ENCODE measurements at regions of chr12 and their contacts with region 1.

Region 1: DNA sequence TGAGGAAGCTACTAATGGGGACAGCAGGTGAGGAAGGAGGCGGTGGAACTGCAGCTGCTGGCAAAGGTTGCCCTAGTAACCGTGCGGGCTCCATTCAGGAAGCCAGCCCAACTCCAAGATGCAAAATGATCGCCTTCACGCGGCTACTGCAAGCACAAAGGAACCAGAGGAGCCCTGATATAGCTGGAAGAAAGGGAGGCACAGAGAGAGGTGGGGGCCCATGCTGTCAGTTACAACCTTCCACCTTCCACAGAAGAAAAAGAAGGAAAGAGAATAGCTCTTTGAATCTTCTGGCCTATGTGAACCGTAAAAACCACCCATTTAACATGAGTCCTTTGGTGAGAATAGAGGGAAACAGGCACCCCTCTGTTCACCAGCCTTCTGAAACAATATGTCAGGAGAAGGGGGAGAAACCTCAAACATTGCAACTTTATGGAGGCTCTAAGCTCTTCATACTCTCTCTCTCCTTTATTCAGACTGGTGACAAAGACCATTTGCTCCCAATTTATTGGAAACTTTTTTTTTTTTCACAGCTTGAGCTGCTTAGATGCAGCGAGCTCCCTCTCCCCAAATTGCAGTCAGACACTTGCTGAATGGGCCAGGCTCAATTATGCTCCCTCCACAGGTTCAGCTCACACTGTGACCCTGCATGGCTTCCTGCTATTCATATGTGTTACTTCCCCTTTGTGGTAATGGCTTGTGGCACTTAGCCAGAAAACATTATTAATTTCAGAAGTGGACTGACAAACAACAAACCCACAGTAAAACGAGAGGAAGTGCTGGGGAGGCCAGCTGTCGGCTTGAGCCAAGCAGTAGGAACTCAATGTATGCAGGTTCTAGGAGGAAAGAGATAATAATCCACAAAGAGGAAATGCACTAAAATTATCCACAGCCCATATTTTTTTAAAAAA is 6.2 kb downstream of the DUSP6 start:
- DNase-seq: peak; percentile 40 to 73 (median 68)
- ATAC-seq: peak; percentile 59 to 66
- H3K4me3 ChIP-seq: no peak overlapping the region
- H3K27ac ChIP-seq: peak overlapping the region; percentile 56
- H3K4me1 ChIP-seq: peaks cover 3% of the 10 kb centered on the region
- H3K27me3 ChIP-seq: no peaks in the 10 kb centered on the region

Region 2: DNA sequence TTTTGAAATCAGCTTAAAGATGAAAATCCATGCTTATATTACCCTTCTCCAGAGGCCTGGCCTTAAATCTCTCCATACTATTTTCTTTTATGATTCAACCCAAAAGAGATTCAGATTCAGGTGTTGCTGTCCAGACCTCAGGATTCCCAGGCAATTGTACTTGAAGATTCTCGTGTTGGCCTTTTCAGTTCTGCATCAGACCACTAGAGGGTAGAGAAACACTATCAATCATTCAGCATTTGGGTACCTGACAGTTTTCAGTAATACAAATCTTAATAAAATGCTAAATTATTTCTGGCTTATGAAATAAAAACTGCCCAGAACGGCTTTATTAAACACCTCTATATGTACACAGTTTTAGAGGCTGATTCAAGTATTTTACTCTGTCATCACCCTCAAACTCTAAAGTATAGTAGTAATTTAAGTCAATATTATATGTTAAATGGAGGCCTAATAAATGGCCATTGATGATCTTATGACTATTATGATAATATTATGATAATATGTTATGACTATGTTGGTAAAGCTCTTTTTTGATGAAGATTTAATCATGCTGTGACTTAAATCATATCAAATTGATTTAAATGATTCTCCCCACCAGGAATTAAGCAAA is 294.9 kb before region 1 on chr12:
- intact Hi-C with region 1: loop called (anchors 5 to 10 kb)
- DNase-seq: no peak
- ATAC-seq: peak; percentile 64 to 81
- H3K4me3 ChIP-seq: no peak overlapping the region
- H3K27ac ChIP-seq: no peak overlapping the region
- H3K4me1 ChIP-seq: no peaks in the 10 kb centered on the region
- H3K27me3 ChIP-seq: no peaks in the 10 kb centered on the region

Region 3: GRCh38 chr12:89162704-89163261 is 183.3 kb before region 1 on chr12:
- intact Hi-C with region 1: loop called in 1 of 4 experiments (anchors 10 kb)
- DNase-seq: peak; percentile 37 to 61 (median 40)
- ATAC-seq: peak; percentile 86 to 89
- H3K4me3 ChIP-seq: no peak overlapping the region
- H3K27ac ChIP-seq: no peak overlapping the region
- H3K4me1 ChIP-seq: peaks cover 3% of the 10 kb centered on the region
- H3K27me3 ChIP-seq: no peaks in the 10 kb centered on the region

Region 4: DNA sequence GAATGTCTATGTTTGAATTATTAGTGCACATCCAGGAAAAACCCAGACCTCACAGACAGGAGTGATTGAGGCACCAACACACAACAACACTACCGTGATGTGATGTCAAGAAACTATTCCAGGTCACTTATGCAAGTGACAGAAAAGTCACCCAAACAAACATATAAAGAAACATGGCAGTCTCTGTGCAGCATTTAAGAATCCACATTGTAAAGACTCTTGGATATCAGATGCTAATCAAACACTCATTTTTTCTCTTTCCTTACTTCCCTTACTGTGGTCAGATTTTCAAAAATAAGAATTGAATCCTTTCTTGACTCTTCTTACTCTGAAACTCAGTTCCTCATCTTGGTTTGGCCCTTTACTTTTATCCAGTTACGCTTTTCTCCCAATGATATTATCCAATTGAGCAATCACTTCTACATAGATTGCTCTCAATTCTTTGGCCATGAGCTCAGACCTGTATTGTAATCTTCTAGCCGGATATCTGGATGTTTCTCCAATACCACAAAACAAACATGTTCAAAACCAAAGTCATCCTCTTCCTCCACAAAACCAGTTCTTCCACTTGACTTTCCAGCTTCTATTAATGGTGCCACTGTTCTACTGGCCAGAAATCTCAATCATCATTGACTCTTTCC is 109.2 kb before region 1 on chr12:
- intact Hi-C with region 1: loop called in 1 of 4 experiments (anchors 10 kb)
- DNase-seq: no peak
- ATAC-seq: no peak
- H3K4me3 ChIP-seq: no peak overlapping the region
- H3K27ac ChIP-seq: no peak overlapping the region
- H3K4me1 ChIP-seq: peaks cover 6% of the 10 kb centered on the region
- H3K27me3 ChIP-seq: no peaks in the 10 kb centered on the region

Measured in right cardiac atrium (tissue), 5 donors.